ENCODE measurements at regions of chr1 and their contacts with region 1.

Region 1: DNA sequence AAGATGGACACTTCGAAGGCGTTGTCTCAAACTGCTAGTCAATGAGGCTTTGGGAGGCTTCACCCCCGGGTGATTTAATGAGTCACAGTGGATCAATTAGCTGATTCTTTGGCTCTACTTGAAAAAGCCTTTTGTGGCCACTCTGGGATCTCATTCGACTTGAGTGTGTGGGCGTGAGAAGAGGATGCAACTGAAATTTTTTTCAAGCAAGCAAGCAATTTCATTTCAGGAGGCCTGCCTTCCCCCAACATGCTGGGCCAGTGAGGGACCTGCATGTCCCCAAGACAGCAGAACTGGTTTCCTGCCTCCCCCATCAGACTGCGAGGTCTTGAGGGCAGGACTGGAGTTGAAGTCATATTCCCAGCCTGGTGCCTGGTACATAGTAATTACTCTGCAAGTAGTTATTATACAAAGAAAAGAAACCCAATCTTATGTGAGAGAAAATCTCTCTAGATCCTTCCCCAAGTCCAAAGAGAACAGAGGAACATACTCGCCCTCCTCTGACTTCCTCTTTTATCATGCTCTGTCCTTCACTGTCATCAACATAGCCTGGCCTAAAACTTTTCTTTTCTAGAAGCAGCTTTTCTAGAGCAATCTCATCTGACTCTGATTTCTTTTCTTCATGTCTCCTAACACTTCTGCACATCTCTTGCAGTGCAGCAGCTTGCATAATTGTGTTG is 22.7 kb downstream of the SYT6 start:
- DNase-seq: no peak
- H3K4me3 ChIP-seq: no peak overlapping the region
- H3K27ac ChIP-seq: no peak overlapping the region
- H3K4me1 ChIP-seq: no peaks in the 10 kb centered on the region
- CTCF ChIP-seq: no peak

Region 2: GRCh38 chr1:114062477-114063099 is 68.4 kb before region 1 on chr1:
- CTCF ChIA-PET with region 1: no interaction called
- POLR2A ChIA-PET with region 1: no interaction called
- intact Hi-C with region 1: no loop called
- DNase-seq: no peak
- H3K4me3 ChIP-seq: no peak overlapping the region
- H3K27ac ChIP-seq: no peak overlapping the region
- H3K4me1 ChIP-seq: no peaks in the 10 kb centered on the region
- CTCF ChIP-seq: no peak

Region 3: GRCh38 chr1:114192329-114192728 is 61.3 kb after region 1 on chr1:
- CTCF ChIA-PET with region 1: no interaction called
- POLR2A ChIA-PET with region 1: no interaction called
- intact Hi-C with region 1: loop called (anchors 10 kb)
- DNase-seq: no peak
- H3K4me3 ChIP-seq: no peak overlapping the region
- H3K27ac ChIP-seq: no peak overlapping the region
- H3K4me1 ChIP-seq: no peaks in the 10 kb centered on the region
- CTCF ChIP-seq: no peak